Colonic mucosa (tissue), 4 donors: ENCODE measurements at regions of chr16 and their contacts with region 1.

Region 1: DNA sequence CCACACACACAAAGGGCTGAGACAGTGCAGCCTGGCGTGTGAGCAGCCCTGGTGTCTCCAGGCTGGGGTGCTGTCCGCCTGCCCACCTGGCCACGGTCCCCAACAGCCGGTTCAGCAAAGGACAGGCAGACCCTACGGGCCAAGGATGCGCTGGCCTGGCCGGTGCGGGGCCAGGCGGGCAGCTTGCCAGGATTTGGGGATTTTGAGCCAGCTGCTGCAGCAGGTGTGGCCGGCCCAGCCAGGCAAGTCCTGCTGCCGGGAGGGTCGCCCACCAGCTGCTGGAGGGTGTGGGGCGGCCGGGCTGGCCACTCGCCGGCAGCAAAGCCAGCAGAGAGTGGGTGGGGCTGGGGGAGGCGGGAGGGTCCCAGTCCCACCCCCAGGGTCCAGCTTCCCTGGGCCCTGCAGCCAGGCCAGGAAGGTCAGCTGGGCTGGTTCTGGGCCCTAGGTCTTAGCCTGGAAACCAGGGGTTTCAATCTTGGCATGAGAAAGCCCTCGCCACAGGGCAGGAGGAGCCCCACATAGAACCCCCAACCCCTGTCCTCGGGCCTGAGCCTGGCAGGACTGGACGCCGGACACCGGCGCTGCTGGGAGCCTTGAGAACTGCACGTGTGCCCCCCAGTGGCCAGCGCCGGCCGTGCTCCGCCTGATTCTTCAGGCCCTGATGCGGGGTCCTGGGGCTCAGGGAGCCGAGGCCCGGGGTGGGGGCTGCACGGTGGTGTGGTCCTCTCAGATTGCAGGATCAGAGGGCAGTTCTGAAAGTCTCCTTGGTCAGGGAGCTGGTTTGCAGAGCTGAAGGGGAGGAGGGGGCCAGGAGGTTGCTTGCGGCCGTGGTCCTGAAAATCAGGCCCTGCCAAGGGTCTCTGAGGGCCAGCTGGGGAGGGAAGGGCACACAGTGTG is 17.6 kb upstream of the SSTR5 start:
- DNase-seq: peak; percentile 49
- H3K4me3 ChIP-seq: no peak overlapping the region
- H3K27ac ChIP-seq: no peak overlapping the region
- H3K4me1 ChIP-seq: no peaks in the 10 kb centered on the region
- H3K27me3 ChIP-seq: no peaks in the 10 kb centered on the region
- CTCF ChIP-seq: peak; percentile 83

Region 2: DNA sequence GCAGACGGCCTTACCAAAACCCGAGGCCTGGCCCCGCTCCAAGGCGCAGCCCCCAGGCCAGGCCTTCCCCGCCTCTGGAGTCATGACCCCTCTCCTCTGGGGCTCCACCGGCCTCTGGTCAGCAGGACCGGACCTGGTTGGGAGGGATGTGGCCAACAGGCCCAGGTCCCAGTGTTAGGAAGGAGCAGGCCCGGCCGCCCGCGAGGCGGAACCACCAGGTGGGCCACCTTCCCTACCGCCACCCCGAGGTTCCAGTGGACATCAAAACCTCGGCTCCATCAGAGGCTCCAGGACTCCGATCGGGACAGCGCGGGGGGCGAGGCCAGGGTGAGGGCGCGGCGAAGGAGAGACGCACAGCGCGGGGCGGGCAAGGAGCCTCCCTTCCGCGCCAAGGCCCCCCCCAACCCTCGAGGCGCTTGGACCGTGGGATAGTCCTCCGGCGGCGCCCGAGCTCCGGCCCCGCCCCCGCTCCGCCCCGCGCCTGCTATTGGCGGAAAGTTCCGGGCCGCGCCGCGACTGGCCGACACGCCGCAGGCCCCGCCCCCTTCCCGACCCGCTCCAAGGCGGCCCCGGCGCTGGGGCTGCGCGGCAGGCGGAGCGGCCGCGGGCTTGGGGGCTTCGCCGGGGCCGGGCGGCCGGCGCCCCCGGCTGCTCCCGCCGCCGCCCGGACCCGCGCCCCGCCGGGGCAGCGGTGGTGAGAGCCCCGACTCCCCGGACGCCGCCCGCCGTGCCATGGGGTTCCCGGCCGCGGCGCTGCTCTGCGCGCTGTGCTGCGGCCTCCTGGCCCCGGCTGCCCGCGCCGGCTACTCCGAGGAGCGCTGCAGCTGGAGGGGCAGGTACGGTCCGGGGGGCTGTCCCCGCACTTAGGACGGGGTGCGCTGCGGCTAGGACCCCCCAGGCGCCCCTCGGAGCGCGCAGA is 340.1 kb before region 1 on chr16 and contains the start of gene METRN:
- intact Hi-C with region 1: loop called (anchors 5 kb)
- DNase-seq: peak; percentile 92
- H3K4me3 ChIP-seq: peak within 1 kb of the TSS; percentile 70
- H3K27ac ChIP-seq: no peak within 1 kb of the TSS
- H3K4me1 ChIP-seq: peaks cover 26% of the 10 kb centered on the region
- H3K27me3 ChIP-seq: peaks cover 17% of the 10 kb centered on the region
- CTCF ChIP-seq: no peak
- total RNA-seq, gene METRN: 23.3 to 50.0 TPM

Region 3: GRCh38 chr16:814974-815373 is 239.9 kb before region 1 on chr16:
- intact Hi-C with region 1: loop called (anchors 2 kb)
- DNase-seq: no peak
- H3K4me3 ChIP-seq: no peak overlapping the region
- H3K27ac ChIP-seq: no peak overlapping the region
- H3K4me1 ChIP-seq: no peaks in the 10 kb centered on the region
- H3K27me3 ChIP-seq: peaks cover 28% of the 10 kb centered on the region
- CTCF ChIP-seq: no peak

Region 4: GRCh38 chr16:840009-840408 is 214.9 kb before region 1 on chr16:
- intact Hi-C with region 1: no loop called
- DNase-seq: no peak
- H3K4me3 ChIP-seq: no peak overlapping the region
- H3K27ac ChIP-seq: no peak overlapping the region
- H3K4me1 ChIP-seq: no peaks in the 10 kb centered on the region
- H3K27me3 ChIP-seq: no peaks in the 10 kb centered on the region
- CTCF ChIP-seq: no peak

Region 5: DNA sequence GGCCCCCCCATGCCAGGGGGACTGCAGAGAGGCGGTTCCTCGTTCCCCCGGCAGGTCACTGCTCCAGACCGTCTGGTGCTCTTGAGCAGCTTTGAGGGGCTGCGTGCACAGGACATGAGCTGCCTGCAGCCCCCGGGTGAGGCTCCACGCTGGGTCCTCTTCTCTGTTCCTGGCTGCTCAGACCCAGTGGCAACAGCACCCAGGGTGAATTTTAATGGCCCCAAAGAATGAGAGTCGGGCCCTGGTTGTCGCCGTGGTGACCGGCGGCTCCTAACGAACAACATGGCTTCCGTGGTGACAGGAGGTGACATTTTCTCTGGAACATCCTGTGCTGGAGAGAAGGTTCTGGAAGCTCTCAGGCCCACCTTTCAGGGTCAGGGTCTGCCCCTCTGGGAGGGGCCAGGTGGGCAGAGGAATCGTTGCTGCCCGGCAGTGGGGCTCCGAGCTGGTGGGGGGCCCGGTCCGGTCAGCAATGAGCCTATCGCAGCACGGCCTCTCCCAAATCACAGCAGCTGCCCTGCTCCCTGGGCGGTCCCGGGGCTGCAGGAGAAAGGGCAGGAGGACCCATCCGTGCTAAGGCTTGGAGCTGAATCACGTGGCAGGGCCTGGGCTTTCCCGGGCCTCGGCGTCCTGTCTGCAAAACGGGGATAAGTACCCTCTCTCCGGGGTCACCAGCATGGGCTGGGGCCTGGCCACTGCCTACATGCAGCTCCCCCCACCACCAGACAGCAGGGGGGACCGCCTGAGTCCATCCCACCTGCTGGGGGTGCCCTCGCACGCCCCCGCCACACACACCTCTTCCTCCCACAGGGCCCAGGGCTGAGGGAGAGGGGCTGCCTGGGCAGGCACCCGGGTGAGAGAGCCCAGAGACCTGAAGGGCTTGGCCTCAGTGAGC is 44.5 kb after region 1 on chr16:
- intact Hi-C with region 1: loop called (anchors 2 kb)
- DNase-seq: no peak
- H3K4me3 ChIP-seq: no peak overlapping the region
- H3K27ac ChIP-seq: no peak overlapping the region
- H3K4me1 ChIP-seq: peaks cover 4% of the 10 kb centered on the region
- H3K27me3 ChIP-seq: peaks cover 30% of the 10 kb centered on the region
- CTCF ChIP-seq: no peak

Region 6: GRCh38 chr16:1258906-1259759 is 204.2 kb after region 1 on chr16:
- intact Hi-C with region 1: no loop called
- DNase-seq: no peak
- H3K4me3 ChIP-seq: no peak overlapping the region
- H3K27ac ChIP-seq: no peak overlapping the region
- H3K4me1 ChIP-seq: no peaks in the 10 kb centered on the region
- H3K27me3 ChIP-seq: peaks cover 37% of the 10 kb centered on the region
- CTCF ChIP-seq: no peak